ENCODE measurements at regions of chr13 and their contacts with region 1.

Region 1: GRCh38 chr13:36131222-36131930 is at the start of gene DCLK1:
- DNase-seq: peak; percentile 7
- H3K4me3 ChIP-seq: peak within 1 kb of the TSS; percentile 39 to 50
- H3K27ac ChIP-seq: no peak within 1 kb of the TSS
- H3K4me1 ChIP-seq: no peaks in the 10 kb centered on the region
- H3K27me3 ChIP-seq: no peaks in the 10 kb centered on the region
- CTCF ChIP-seq: no peak
- POLR2A ChIP-seq: no peak
- total RNA-seq, gene DCLK1: 3.8 to 3.9 TPM

Region 2: DNA sequence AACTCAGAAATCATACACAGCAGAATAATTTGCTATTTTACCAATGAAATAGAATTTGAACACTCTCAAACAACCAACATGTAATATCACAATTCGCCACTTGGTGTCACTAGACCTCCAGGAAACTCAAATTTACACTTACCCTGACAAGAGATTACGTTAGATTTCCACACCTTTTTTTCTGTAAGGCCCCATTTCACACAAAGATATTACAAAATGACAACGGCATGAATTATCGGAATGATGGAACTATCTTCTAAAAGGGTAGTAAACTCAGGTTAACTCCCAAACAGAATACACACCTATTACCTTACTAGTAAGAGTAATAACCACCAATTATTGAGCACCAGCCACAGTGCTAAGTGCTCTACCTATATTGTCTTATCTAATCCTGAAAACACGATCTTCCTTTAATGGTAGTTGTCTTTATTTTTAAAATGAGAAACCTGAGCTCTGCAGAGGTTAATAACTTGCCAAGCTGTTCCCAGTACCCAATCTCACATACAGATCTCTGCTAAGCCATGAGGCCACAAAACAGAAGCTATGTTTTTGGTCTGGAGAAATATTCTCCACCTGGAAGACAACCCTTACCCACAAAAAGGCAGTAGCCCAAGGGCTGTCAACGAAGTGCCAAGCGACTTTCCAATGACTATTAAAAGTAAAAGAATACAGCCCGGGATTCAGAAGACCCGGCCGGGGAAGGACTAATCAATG is 152.6 kb before region 1 on chr13:
- intact Hi-C with region 1: loop called (anchors 5 kb)
- DNase-seq: peak; percentile 30
- H3K4me3 ChIP-seq: no peak overlapping the region
- H3K27ac ChIP-seq: no peak overlapping the region
- H3K4me1 ChIP-seq: no peaks in the 10 kb centered on the region
- H3K27me3 ChIP-seq: no peaks in the 10 kb centered on the region
- CTCF ChIP-seq: peak; percentile 70 to 92 (median 88)
- POLR2A ChIP-seq: no peak

Region 3: DNA sequence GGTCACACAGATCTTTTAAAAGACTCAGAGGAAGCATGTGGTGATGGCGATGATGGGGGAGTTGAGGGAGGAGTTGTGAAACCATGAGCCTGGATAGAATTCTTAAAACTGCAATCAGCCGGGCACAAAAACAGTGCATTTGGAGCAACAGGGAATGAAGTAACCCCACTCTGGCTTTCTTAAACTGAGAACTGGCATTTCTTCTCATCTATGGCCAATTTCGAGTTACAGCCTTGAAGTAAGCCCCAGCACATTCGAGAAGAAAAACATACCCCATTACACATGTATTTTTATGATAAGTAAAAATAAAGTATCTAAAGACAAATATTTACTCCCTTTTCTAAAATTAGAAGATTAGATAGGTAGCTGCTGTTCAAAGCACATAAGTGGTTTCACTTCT is 70.3 kb before region 1 on chr13:
- intact Hi-C with region 1: loop called (anchors 5 kb)
- DNase-seq: no peak
- H3K4me3 ChIP-seq: no peak overlapping the region
- H3K27ac ChIP-seq: no peak overlapping the region
- H3K4me1 ChIP-seq: no peaks in the 10 kb centered on the region
- H3K27me3 ChIP-seq: no peaks in the 10 kb centered on the region
- CTCF ChIP-seq: no peak
- POLR2A ChIP-seq: no peak